ENCODE measurements at regions of chr10 and their contacts with region 1.

Region 1: DNA sequence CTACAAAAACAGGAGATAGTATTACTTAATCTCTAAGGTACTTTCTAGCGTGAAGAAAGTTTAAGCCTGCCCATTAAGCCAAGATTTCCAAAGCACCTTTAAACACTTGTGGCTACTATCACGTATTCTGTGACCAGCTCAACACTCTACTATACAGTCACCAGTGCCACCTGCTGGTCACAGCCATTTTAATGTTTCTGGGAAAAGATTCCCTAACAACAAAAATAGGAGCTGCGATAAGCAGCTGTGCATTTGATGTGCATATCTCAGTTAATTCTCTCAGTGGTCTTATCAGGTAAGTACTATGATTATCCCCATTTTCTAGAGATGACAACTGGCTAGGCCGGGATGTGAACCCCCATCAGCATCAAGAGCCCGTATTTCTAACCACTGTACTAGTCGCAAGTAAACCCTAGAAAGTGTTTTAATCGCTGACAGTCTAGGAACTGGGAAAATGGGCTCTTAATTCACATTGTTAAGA is 860 bp downstream of the SEC31B start:
- DNase-seq: peak; percentile 57 to 58
- ATAC-seq: peak; percentile 76 to 85
- H3K4me3 ChIP-seq: no peak overlapping the region
- H3K27ac ChIP-seq: no peak overlapping the region
- H3K4me1 ChIP-seq: no peaks in the 10 kb centered on the region
- CTCF ChIP-seq: peak; percentile 84
- EP300 ChIP-seq: no peak
- POLR2A ChIP-seq: no peak
- RAD21 ChIP-seq: peak; percentile 65 to 69

Region 2: DNA sequence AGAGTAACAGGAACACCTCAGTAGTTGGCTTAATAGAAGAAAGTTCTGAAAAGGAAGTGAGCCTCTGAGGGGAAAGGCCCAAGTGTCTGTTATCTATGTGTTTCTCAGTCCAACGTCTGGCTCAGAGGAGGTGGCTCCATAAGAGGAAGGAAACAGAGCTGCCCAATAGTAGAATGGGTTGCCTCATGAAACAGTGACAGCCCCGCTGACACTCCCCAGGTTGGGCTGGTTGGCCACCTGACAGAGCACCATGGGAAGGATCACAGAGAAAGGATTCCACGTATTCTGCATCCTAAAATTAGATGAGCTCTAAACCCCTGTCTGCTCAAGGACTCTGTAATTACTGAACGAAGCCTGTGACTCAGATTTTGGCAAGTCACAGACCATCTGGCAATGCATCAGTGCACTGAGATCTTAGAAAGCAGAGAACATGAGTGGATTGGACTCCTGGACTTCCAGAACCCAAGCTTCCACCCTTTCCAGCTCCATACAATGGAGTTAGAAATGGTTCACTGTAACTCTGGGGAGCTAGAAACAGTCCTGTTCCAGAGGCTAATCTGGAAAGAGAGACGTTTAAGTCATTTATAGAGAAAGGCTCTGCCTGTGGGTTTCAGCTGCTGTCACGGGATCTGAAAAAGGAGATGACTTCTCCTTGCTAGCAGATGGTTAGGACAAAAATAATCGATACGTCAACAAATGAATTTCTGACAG is 191.6 kb before region 1 on chr10:
- CTCF ChIA-PET with region 1: interaction called, 12 read pairs
- POLR2A ChIA-PET with region 1: no interaction called
- DNase-seq: no peak
- ATAC-seq: no peak
- H3K4me3 ChIP-seq: no peak overlapping the region
- H3K27ac ChIP-seq: no peak overlapping the region
- H3K4me1 ChIP-seq: no peaks in the 10 kb centered on the region
- CTCF ChIP-seq: no peak
- EP300 ChIP-seq: no peak
- POLR2A ChIP-seq: no peak
- RAD21 ChIP-seq: no peak

Region 3: DNA sequence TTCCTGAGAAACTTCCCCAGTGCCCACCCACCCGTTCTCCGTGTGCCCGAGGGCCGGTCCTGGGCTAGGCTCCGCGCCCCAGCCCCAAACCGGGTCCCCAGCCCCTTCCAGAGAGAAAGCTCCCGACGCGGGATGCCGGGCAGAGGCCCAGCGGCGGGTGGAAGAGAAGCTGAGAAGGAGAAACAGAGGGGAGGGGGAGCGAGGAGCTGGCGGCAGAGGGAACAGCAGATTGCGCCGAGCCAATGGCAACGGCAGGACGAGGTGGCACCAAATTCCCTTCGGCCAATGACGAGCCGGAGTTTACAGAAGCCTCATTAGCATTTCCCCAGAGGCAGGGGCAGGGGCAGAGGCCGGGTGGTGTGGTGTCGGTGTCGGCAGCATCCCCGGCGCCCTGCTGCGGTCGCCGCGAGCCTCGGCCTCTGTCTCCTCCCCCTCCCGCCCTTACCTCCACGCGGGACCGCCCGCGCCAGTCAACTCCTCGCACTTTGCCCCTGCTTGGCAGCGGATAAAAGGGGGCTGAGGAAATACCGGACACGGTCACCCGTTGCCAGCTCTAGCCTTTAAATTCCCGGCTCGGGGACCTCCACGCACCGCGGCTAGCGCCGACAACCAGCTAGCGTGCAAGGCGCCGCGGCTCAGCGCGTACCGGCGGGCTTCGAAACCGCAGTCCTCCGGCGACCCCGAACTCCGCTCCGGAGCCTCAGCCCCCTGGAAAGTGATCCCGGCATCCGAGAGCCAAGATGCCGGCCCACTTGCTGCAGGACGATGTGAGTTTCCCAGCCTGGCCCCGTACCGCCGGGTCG is 171.8 kb before region 1 on chr10 and contains the start of gene SCD:
- CTCF ChIA-PET with region 1: interaction called, 353 read pairs
- POLR2A ChIA-PET with region 1: interaction called, 3 read pairs
- DNase-seq: peak; percentile 93 to 98
- ATAC-seq: peak; percentile 91 to 93
- H3K4me3 ChIP-seq: peak within 1 kb of the TSS; percentile 99
- H3K27ac ChIP-seq: peak within 1 kb of the TSS; percentile 99
- H3K4me1 ChIP-seq: peaks cover 60% of the 10 kb centered on the region
- CTCF ChIP-seq: no peak
- EP300 ChIP-seq: peak in 1 of 2 experiments; percentile 18; a peak in 1 of 5 replicates
- POLR2A ChIP-seq: peak; percentile 71
- RAD21 ChIP-seq: 0 out of 5 replicates have a peak, but pooled peaks have one; percentile 1 to 8
- polyA plus RNA-seq, gene SCD: 329 and 348 TPM in 2 replicates

Region 4: GRCh38 chr10:100438674-100439315 is 80.0 kb before region 1 on chr10:
- CTCF ChIA-PET with region 1: interaction called, 267 read pairs
- POLR2A ChIA-PET with region 1: no interaction called
- DNase-seq: no peak
- ATAC-seq: no peak
- H3K4me3 ChIP-seq: no peak overlapping the region
- H3K27ac ChIP-seq: no peak overlapping the region
- H3K4me1 ChIP-seq: no peaks in the 10 kb centered on the region
- CTCF ChIP-seq: no peak
- EP300 ChIP-seq: no peak
- POLR2A ChIP-seq: no peak
- RAD21 ChIP-seq: no peak

Region 5: GRCh38 chr10:100508691-100509150 is 10.1 kb before region 1 on chr10:
- CTCF ChIA-PET with region 1: interaction called, 69 read pairs
- POLR2A ChIA-PET with region 1: no interaction called
- DNase-seq: peak; percentile 66 to 79
- ATAC-seq: peak; percentile 91 to 95
- H3K4me3 ChIP-seq: no peak overlapping the region
- H3K27ac ChIP-seq: no peak overlapping the region
- H3K4me1 ChIP-seq: peaks cover 10% of the 10 kb centered on the region; the same call in 2 of the 3 replicates
- CTCF ChIP-seq: peak; percentile 84
- EP300 ChIP-seq: no peak
- POLR2A ChIP-seq: no peak
- RAD21 ChIP-seq: peak; percentile 87 to 91

Region 6: DNA sequence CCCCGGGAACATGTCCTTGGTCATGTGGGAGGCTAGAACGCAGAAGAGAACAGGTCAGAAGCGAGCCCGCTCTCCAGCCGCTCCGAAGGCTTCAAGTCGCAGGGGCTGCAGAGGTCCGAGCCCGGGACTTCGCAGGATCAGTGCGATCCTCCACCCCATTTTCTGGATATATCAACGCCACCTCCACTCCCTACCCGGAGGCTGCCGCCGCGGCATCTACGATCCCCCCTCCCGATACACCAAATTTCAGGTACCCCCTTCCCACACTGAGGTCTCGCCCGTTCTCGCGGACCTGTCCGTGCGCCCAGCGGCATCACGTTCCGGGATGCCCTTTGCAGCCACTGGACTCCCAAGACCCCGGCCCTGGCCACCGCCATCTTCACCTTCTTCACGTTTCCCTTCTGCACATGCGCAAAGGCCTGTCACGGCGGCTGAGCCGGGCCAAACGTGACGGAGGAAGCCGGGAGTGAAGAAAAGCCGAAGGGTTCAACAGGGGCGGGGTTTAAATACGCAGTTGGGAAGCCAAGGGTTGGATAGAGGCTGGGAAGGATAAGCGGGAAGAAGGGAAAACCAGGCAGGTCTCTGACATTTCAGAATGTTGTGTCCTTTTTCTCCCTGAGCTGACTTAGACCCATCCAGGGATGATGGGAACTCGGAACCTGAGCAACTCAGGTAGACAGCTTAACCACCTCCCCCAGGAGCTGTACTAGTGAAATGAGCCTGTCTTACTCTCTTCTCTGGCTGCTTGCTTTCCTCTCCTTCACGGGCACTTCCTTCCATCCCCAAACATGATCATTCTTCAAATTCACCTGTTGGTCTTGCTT is 10.9 kb after region 1 on chr10 and contains the start of gene NDUFB8:
- CTCF ChIA-PET with region 1: interaction called, 45 read pairs
- POLR2A ChIA-PET with region 1: interaction called, 3 read pairs
- DNase-seq: peak; percentile 87
- ATAC-seq: peak; percentile 90 to 94
- H3K4me3 ChIP-seq: peak within 1 kb of the TSS; percentile 80
- H3K27ac ChIP-seq: peak within 1 kb of the TSS; percentile 85 to 96
- H3K4me1 ChIP-seq: peaks cover 13% of the 10 kb centered on the region; the same call in 2 of the 3 replicates
- CTCF ChIP-seq: no peak
- EP300 ChIP-seq: no peak
- POLR2A ChIP-seq: peak; percentile 83
- RAD21 ChIP-seq: no peak
- polyA plus RNA-seq, gene NDUFB8: 208 and 221 TPM in 2 replicates

Region 7: DNA sequence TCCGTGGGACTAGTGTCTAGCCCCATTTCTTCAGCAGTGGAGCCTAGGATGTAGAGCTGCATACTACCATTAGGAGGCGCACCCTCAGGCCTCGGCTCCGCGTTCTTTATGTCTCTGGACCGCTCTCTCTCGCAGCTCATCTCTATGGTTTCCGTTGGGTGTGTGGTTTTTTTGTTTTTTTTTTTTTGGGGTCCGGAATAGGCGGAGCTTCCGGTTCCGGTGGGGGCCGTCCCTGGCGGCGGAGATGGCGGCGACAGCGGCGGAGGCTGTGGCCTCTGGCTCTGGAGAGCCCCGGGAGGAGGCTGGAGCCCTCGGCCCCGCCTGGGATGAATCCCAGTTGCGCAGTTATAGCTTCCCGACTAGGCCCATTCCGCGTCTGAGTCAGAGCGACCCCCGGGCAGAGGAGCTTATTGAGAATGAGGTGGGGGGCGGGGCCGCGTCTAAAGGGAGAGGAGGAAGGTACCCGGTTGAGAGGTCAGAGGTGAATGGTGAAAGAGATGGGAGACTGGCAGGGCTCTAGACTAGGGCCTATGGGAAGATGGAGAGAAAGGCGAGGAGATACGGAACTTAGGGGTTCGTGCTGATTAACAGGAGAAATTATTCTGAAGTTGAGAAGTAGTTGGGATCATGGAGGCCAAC is 17.0 kb after region 1 on chr10 and contains the start of gene HIF1AN:
- CTCF ChIA-PET with region 1: interaction called, 13 read pairs
- POLR2A ChIA-PET with region 1: interaction called, 9 read pairs
- DNase-seq: peak; percentile 97 to 98
- ATAC-seq: peak; percentile 99
- H3K4me3 ChIP-seq: peak within 1 kb of the TSS; percentile 75
- H3K27ac ChIP-seq: peak within 1 kb of the TSS; percentile 84 to 87
- H3K4me1 ChIP-seq: peaks cover 12% of the 10 kb centered on the region; the same call in 2 of the 3 replicates
- CTCF ChIP-seq: peak; percentile 85
- EP300 ChIP-seq: no peak
- POLR2A ChIP-seq: peak; percentile 87
- RAD21 ChIP-seq: no peak
- polyA plus RNA-seq, gene HIF1AN: 21.6 and 26.4 TPM in 2 replicates

Region 8: GRCh38 chr10:100569618-100570473 is 51.0 kb after region 1 on chr10:
- CTCF ChIA-PET with region 1: no interaction called
- POLR2A ChIA-PET with region 1: no interaction called
- DNase-seq: no peak
- ATAC-seq: no peak
- H3K4me3 ChIP-seq: no peak overlapping the region
- H3K27ac ChIP-seq: no peak overlapping the region
- H3K4me1 ChIP-seq: no peaks in the 10 kb centered on the region
- CTCF ChIP-seq: no peak
- EP300 ChIP-seq: no peak
- POLR2A ChIP-seq: no peak
- RAD21 ChIP-seq: no peak

Measured in A549 (cell line).